GM12878 (cell line): ENCODE measurements at regions of chr5 and their contacts with region 1.

Region 1: GRCh38 chr5:14208071-14209021 is 65.2 kb downstream of the TRIO start:
- DNase-seq: peak; percentile 86
- ATAC-seq: peak; percentile 75
- H3K4me3 ChIP-seq: peak overlapping the region; percentile 61
- H3K27ac ChIP-seq: peak overlapping the region; percentile 94
- H3K4me1 ChIP-seq: peaks cover 62% of the 10 kb centered on the region
- H3K27me3 ChIP-seq: no peaks in the 10 kb centered on the region
- CTCF ChIP-seq: peak in 2 of 3 experiments; percentile 39 to 42; a peak in 4 of 6 replicates
- EP300 ChIP-seq: peak; percentile 21 to 41; a peak in 2 of 4 replicates
- POLR2A ChIP-seq: no peak
- RAD21 ChIP-seq: peak; percentile 72

Region 2: GRCh38 chr5:14108170-14108996 is 100.0 kb before region 1 on chr5:
- CTCF ChIA-PET with region 1: interaction called, 67 read pairs
- POLR2A ChIA-PET with region 1: interaction called, 8 read pairs
- RAD21 ChIA-PET with region 1: interaction called, 27 read pairs
- SMC1A ChIA-PET with region 1: interaction called, 74 read pairs
- in situ Hi-C with region 1: loop called (anchors 5 kb)
- intact Hi-C with region 1: loop called (anchors 1 kb)
- DNase-seq: peak; percentile 44
- ATAC-seq: peak; percentile 92
- H3K4me3 ChIP-seq: peak overlapping the region; percentile 51
- H3K27ac ChIP-seq: peak overlapping the region; percentile 64
- H3K4me1 ChIP-seq: peaks cover 22% of the 10 kb centered on the region
- H3K27me3 ChIP-seq: no peaks in the 10 kb centered on the region
- CTCF ChIP-seq: peak; percentile 75 to 81 (median 77)
- EP300 ChIP-seq: no peak
- POLR2A ChIP-seq: no peak
- RAD21 ChIP-seq: peak; percentile 90

Region 3: DNA sequence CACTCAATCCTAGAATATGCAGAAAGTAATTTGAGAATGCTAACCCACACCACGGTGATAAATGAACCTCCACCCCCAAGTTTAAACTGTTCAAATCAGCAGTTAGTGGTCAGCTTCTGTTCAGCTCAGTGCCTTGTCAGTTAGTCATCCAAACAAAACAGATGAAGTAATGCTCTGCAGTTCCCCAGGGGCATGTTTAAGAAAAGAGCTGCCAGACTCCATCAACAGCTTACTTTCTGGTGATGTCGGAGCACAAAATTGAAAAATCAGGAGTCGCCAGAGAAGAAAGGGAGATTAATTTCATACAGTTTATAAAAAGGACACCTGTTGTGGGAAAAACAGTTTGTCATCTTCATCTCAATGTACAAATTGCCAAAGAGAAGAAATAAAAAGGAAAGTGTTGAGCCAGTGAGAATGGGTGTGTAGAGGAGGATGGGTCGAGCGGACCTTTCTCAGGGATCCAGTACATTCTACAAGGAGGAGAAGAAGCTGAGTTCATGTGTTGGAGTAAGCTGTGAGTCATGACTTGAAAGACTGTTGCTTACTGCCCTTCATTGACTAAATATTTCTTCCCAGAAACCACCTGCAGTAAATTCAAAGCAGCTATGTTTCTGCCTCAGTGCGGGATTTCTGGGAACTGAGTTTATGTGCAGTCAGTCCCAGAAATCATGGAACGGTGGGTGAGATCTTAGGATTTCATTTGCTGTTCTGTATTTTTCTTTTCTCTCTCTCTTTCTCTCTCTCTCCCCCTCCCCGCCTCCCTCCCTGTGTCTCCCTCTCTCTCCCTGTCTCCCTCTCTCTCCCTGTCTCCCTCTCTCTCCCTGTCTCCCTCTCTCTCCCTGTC is 51.5 kb before region 1 on chr5:
- CTCF ChIA-PET with region 1: interaction called, 70 read pairs
- POLR2A ChIA-PET with region 1: interaction called, 347 read pairs
- RAD21 ChIA-PET with region 1: interaction called, 373 read pairs
- SMC1A ChIA-PET with region 1: interaction called, 222 read pairs
- in situ Hi-C with region 1: no loop called
- intact Hi-C with region 1: no loop called
- DNase-seq: peak; percentile 67
- ATAC-seq: peak; percentile 75
- H3K4me3 ChIP-seq: peak overlapping the region; percentile 20
- H3K27ac ChIP-seq: peak overlapping the region; percentile 92
- H3K4me1 ChIP-seq: peaks cover 60% of the 10 kb centered on the region
- H3K27me3 ChIP-seq: no peaks in the 10 kb centered on the region
- CTCF ChIP-seq: no peak
- EP300 ChIP-seq: peak in 1 of 2 experiments; percentile 61; a peak in 2 of 4 replicates
- POLR2A ChIP-seq: peak; percentile 39; the same call in 1 of the 2 replicates
- RAD21 ChIP-seq: peak; percentile 8; the same call in 1 of the 2 replicates

Region 4: DNA sequence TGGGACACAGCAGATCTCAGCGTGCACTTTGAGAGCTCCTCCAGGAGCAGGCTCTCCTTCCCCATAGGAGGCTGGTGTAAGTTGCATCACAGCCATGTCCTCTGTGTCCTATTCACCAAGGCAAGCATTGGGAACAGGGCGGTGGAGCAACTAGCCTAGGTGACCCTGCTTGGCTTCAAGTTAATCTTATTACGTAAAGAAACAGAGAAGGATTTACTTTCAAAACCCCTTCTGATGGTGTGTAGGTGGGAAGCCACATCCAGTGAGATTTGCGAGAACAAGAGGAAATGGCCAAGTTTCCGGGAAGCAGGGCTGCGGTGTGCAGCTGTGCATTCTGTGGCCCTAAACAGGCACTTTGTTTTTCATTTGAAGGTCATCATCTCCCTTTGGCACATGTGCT is 15.0 kb after region 1 on chr5:
- CTCF ChIA-PET with region 1: interaction called, 6 read pairs
- POLR2A ChIA-PET with region 1: interaction called, 11 read pairs
- RAD21 ChIA-PET with region 1: interaction called, 9 read pairs
- SMC1A ChIA-PET with region 1: interaction called, 48 read pairs
- in situ Hi-C with region 1: no loop called
- intact Hi-C with region 1: no loop called
- DNase-seq: no peak
- ATAC-seq: no peak; the same call in 2 of the 3 replicates
- H3K4me3 ChIP-seq: no peak overlapping the region
- H3K27ac ChIP-seq: no peak overlapping the region
- H3K4me1 ChIP-seq: peaks cover 35% of the 10 kb centered on the region
- H3K27me3 ChIP-seq: no peaks in the 10 kb centered on the region
- CTCF ChIP-seq: no peak
- EP300 ChIP-seq: no peak
- POLR2A ChIP-seq: no peak
- RAD21 ChIP-seq: no peak

Region 5: GRCh38 chr5:14264604-14265316 is 56.4 kb after region 1 on chr5:
- CTCF ChIA-PET with region 1: interaction called, 118 read pairs
- POLR2A ChIA-PET with region 1: interaction called, 64 read pairs
- RAD21 ChIA-PET with region 1: interaction called, 72 read pairs
- SMC1A ChIA-PET with region 1: interaction called, 166 read pairs
- in situ Hi-C with region 1: no loop called
- intact Hi-C with region 1: loop called (anchors 2 kb)
- DNase-seq: no peak
- ATAC-seq: peak; percentile 94
- H3K4me3 ChIP-seq: peak overlapping the region; percentile 4
- H3K27ac ChIP-seq: no peak overlapping the region; the same call in 1 of the 2 replicates
- H3K4me1 ChIP-seq: peaks cover 36% of the 10 kb centered on the region
- H3K27me3 ChIP-seq: no peaks in the 10 kb centered on the region
- CTCF ChIP-seq: no peak
- EP300 ChIP-seq: no peak
- POLR2A ChIP-seq: peak; percentile 51; the same call in 1 of the 2 replicates
- RAD21 ChIP-seq: 0 out of 2 replicates have a peak, but pooled peaks have one; percentile 12

Region 6: DNA sequence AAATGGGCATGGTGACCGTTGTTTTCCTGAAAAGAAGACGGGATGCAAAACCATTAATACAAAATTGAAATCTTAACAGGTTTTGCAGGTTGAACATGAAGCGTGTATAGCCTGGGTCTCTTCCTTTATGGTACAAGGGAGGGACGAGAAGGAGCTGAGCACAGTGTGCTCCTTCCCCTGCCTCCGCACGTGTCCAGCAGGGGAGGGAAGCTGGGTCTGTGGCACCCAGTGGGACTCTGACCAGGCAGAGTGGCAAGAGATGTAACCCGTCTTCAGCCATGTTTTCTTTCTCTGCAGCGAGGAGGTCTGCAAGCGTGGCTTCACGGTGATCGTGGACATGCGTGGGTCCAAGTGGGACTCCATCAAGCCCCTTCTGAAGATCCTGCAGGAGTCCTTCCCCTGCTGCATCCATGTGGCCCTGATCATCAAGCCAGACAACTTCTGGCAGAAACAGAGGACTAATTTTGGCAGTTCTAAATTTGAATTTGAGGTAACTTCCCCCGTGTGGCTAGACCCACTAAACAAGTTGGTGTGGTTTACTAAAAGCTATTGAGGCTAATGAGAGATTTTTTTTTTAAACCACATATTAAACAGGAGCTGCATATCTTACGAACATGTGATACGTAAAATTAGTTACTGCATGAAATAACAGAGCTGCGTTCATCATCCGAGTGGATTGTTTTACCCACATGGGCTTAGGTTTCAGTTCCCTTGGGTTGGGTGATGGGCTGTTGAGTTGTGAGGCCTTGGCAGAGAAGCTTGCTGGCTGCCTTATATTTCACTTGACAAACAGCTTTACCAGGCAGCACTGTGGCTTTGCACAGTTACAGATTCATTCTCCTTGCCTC is 78.5 kb after region 1 on chr5:
- CTCF ChIA-PET with region 1: interaction called, 4 read pairs
- POLR2A ChIA-PET with region 1: interaction called, 9 read pairs
- RAD21 ChIA-PET with region 1: interaction called, 13 read pairs
- SMC1A ChIA-PET with region 1: interaction called, 17 read pairs
- in situ Hi-C with region 1: no loop called
- intact Hi-C with region 1: no loop called
- DNase-seq: peak; percentile 86
- ATAC-seq: peak; percentile 95
- H3K4me3 ChIP-seq: no peak overlapping the region
- H3K27ac ChIP-seq: peak overlapping the region; percentile 53
- H3K4me1 ChIP-seq: peaks cover 17% of the 10 kb centered on the region
- H3K27me3 ChIP-seq: no peaks in the 10 kb centered on the region
- CTCF ChIP-seq: no peak
- EP300 ChIP-seq: peak; percentile 79 to 90
- POLR2A ChIP-seq: no peak
- RAD21 ChIP-seq: no peak

Region 7: DNA sequence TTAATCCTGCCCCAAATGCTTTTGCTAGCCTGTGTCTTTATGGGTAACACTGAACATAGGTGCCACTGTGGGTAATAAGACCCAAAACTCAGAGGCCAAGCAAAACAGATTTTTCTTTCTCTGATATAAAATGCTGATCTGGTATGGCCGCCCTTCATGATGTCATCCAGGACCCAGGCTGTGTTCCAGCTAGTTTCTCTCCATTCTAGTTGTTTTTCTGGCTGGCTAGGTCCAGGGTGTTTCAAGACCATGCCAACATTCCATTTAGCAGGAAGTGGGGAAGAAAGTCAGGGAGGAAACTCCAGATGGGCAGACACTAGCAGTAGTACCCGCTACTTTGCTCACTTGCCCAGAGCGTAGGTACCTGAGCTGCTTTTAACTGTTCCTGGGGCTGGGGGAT is 189.4 kb after region 1 on chr5:
- CTCF ChIA-PET with region 1: no interaction called
- POLR2A ChIA-PET with region 1: no interaction called
- RAD21 ChIA-PET with region 1: no interaction called
- SMC1A ChIA-PET with region 1: no interaction called
- in situ Hi-C with region 1: no loop called
- intact Hi-C with region 1: no loop called
- DNase-seq: no peak
- ATAC-seq: no peak
- H3K4me3 ChIP-seq: no peak overlapping the region
- H3K27ac ChIP-seq: no peak overlapping the region
- H3K4me1 ChIP-seq: no peaks in the 10 kb centered on the region
- H3K27me3 ChIP-seq: no peaks in the 10 kb centered on the region
- CTCF ChIP-seq: no peak
- EP300 ChIP-seq: no peak
- POLR2A ChIP-seq: no peak
- RAD21 ChIP-seq: no peak